Naive thymus-derived CD4-positive, alpha-beta T cell (primary cell): ENCODE measurements at regions of chr7 and their contacts with region 1.

Region 1: DNA sequence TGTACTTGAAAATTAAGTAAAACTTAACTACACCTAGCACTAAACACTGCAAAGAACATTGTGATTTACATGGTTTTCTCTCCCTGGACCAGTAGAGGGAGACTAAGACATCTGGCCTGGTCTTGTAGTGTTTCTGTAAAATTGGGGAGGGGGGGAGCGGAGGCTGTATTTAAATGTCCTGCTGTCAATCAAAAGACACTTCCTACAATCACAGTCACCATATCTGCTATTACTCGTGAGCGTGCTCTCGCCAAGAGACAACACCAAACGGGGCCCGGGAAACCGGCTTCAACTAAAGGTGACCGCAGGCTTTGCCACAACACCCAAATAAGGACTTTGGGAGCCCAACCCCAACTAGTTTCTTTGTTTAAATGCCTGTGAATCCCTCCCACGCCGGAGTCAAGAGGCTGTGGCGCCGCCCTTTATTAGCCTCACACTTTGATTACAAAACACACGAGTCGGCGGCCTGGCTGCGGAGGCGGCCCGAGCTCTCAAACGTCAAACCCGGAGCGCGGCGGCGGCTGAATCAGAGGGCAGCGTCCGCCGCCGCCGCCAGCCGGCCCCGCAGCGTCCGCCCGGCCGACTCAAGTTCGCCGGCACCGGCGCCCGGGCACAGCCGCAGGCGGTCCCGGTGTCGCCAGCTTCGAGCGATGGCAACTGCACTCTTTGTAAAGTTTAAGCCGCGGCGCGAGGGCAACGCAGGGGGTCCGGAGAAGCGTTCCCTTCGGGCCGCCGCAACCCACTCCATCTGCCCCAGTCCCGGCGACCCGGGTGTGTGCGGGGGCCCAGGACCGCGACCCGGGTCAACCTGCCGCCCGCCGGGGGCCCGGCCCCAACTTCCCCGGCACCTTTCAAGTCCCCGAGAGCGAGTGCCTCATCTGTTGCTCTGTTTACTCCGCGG is 1.3 kb downstream of the KDM7A start:
- DNase-seq: peak; percentile 69 to 95 (median 92)
- ATAC-seq: peak; percentile 73
- H3K4me3 ChIP-seq: peak overlapping the region; percentile 63
- H3K4me3 Mint-ChIP-seq: peak overlapping the region; percentile 68 to 94 (median 89)
- H3K27ac ChIP-seq: peak overlapping the region; percentile 92
- H3K27ac Mint-ChIP-seq: peak overlapping the region; percentile 81 to 98 (median 93)
- H3K4me1 ChIP-seq: peaks cover 25 to 26% of the 10 kb centered on the region in 2 donors
- H3K4me1 Mint-ChIP-seq: peaks cover 29 to 61% (median 52%) of the 10 kb centered on the region in 7 donors
- H3K27me3 ChIP-seq: no peaks in the 10 kb centered on the region
- H3K27me3 Mint-ChIP-seq: peaks cover 0 to 4% (median 0%) of the 10 kb centered on the region in 5 donors

Region 2: DNA sequence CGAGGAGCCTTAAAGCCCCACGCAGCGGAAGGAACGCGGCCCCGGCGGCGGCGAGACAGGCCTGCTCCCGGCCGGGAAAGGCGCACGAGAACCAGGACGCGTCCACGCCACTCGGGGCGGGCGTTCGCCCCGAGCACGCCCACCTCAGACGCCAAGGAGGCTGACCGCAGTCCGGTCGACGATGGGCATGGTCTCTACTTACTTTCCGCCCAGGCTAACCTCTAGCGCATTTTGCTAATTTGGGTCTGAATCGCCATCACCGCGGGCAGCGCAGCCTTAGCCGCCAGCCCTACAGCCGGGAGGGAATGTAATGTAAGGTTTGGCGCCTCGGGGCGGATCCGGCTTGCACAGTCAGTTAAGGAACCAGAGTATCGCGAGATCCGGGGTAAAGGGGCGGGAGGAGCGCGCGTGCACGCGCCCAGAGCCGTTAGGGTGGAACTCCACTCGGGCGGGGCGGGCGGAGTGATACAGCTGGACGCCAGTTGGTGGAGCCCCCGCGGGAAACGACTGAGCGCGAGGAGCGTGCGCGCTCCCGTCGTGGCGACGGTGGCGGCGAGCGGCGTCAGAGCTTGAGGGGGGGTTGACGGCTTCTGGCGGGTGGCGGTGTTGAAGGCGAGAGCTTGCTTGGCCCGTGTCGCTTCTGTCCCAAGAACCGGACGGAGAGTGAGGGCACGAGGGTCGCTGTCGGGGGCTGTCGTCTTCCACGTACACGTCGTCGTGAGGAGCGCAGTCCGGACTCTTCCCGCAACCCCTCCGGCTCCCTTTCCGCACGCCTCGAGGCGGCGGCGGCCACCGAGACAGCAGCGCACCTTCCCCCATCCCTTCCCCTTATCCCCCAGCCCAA is 815.9 kb before region 1 on chr7 and contains the start of gene LUC7L2:
- CTCF ChIA-PET with region 1: no interaction called
- POLR2A ChIA-PET with region 1: interaction called, 5 read pairs
- intact Hi-C with region 1: loop called (anchors 1 kb)
- DNase-seq: peak; percentile 96 to 100 (median 99)
- ATAC-seq: peak; percentile 91
- H3K4me3 ChIP-seq: peak within 1 kb of the TSS; percentile 80
- H3K4me3 Mint-ChIP-seq: peak within 1 kb of the TSS; percentile 93 to 100 (median 99)
- H3K27ac ChIP-seq: peak within 1 kb of the TSS; percentile 97
- H3K27ac Mint-ChIP-seq: peak within 1 kb of the TSS; percentile 95 to 100 (median 98)
- H3K4me1 ChIP-seq: peaks cover 10 to 27% of the 10 kb centered on the region in 2 donors
- H3K4me1 Mint-ChIP-seq: peaks cover 21 to 60% (median 45%) of the 10 kb centered on the region in 7 donors
- H3K27me3 ChIP-seq: no peaks in the 10 kb centered on the region
- H3K27me3 Mint-ChIP-seq: no peaks in the 10 kb centered on the region
- total RNA-seq, gene LUC7L2: 116 to 183 (median 150) TPM

Region 3: DNA sequence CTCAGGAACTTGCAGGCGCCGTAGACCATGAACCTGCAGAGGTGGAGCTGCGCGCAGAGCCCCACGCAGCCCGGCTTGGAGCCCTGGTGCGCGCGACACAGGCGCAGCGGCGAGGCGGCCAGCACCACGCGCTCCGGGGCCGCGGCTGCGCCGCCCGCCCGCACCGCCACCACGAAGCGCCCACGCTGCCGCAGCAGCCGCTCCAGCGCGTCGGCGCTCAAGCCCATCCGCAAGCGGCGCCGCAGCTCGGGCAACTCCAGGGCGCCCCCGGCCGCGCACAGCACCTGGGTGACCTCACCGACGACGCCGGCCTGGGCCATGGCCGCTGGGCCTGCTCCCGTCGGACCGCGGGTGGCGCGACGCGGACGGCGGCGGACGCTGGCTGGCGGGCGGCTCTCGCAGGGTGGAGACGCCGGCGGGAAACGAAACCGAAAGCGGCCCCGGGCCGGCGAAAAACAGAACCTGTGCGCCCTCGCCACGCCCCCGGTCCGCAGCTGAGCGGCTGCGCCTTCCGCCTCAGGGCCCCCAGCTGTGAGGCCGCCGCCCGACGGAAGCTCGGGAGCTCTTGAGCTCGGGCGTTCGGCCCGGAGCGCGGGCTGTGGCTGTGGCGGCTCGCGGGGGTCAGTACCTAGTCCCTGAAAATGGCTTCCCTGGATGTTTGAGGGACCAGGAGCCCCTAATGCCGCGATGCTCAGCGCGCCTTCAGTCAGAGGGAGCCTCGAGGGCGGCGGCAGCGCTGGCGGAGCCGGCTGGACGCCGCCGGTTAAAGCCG is 112.8 kb before region 1 on chr7 and contains the start of gene PARP12:
- CTCF ChIA-PET with region 1: no interaction called
- POLR2A ChIA-PET with region 1: interaction called, 9 read pairs
- intact Hi-C with region 1: loop called (anchors 1 kb)
- DNase-seq: peak; percentile 77 to 86 (median 83)
- ATAC-seq: peak; percentile 91
- H3K4me3 ChIP-seq: peak within 1 kb of the TSS; percentile 79
- H3K4me3 Mint-ChIP-seq: peak within 1 kb of the TSS; percentile 79 to 94 (median 90)
- H3K27ac ChIP-seq: peak within 1 kb of the TSS; percentile 81
- H3K27ac Mint-ChIP-seq: peak within 1 kb of the TSS; percentile 83 to 95 (median 92)
- H3K4me1 ChIP-seq: peaks cover 32 to 38% of the 10 kb centered on the region in 2 donors
- H3K4me1 Mint-ChIP-seq: peaks cover 34 to 55% (median 48%) of the 10 kb centered on the region in 7 donors
- H3K27me3 ChIP-seq: no peaks in the 10 kb centered on the region
- H3K27me3 Mint-ChIP-seq: peaks cover 0 to 7% (median 0%) of the 10 kb centered on the region in 5 donors
- total RNA-seq, gene PARP12: 66.2 to 145 (median 94.5) TPM

Region 4: DNA sequence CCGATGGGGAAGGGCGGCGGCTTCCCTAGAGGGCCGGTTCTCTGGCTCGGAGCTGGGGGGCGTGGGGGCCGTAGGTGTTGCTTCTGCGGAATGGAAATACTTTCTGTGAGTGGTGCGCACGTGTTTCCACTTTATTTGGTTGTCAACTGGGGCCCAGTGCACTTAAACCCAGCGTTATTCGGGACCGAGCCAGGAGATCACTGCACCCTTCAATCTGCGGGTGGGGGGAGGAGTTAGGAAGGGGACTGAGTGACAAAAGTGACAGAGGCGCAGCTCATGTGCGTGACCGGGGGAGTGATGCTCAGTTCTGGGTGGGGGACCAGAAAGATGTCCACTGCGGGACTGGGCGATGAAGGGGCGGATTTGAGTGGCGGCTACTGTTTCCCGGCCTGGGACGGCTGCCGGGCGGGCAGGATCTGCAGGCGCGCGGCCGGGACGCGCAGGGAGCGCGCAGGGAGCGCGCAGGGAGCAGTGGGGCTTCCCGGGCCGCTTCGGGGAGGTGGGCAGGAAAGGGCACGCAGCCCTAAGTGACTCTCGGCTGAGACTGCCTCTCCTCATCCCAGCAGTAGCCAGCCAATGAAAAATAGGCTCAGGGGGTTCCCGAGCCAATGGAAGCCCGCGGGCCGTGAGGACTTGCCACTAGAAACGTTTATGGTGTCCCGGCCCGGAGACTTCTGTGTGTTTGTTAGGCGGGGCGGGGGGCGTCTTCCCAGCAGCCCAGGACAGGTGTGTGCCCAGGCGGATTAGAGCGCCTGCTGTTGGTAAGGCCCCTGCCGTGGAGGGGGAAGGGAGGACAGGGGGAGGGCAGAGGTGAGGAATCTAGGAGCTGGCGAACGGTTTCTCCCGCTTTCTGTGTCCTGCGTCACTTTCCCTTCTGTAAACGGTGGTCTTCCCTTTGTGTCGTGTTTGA is 55.6 kb after region 1 on chr7:
- CTCF ChIA-PET with region 1: interaction called, 8 read pairs
- POLR2A ChIA-PET with region 1: interaction called, 409 read pairs
- intact Hi-C with region 1: loop called (anchors 1 kb)
- DNase-seq: peak; percentile 13 to 73 (median 44)
- ATAC-seq: peak; percentile 30
- H3K4me3 ChIP-seq: peak overlapping the region; percentile 95
- H3K4me3 Mint-ChIP-seq: peak overlapping the region; percentile 84 to 99 (median 96)
- H3K27ac ChIP-seq: peak overlapping the region; percentile 91
- H3K27ac Mint-ChIP-seq: peak overlapping the region; percentile 95 to 100 (median 99)
- H3K4me1 ChIP-seq: peaks cover 16 to 21% of the 10 kb centered on the region in 2 donors
- H3K4me1 Mint-ChIP-seq: peaks cover 24 to 56% (median 51%) of the 10 kb centered on the region in 7 donors
- H3K27me3 ChIP-seq: no peaks in the 10 kb centered on the region
- H3K27me3 Mint-ChIP-seq: peaks cover 0 to 2% (median 0%) of the 10 kb centered on the region in 5 donors

Region 5: DNA sequence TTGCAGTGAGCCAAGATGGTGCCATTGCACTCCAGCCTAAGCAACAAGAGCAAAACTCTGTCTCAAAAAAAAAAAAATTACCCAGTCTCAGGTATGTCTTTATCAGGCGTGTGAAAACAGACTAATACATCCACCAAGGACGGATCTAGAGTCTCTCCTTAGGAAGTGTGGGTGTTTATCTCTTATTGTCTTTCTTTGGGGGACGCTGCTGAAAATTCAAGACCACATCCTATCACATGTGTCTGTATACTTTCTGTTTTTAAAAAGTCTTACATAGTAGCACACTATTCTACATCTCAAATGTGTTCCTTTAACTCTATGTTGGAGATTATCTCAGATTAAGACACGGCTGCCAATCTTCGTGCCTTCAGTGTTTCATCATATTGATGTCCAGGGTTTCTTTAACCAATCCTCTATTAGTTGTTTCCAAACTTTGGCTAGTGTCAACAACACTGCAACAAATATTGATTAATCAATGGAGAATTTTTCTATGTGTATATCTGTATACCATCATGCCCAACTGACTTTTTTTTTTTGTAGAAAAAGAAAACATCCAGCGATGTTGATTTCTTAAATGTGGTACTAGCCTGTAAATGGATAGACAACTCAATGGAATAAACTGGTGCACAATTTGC is 93.7 kb after region 1 on chr7:
- CTCF ChIA-PET with region 1: no interaction called
- POLR2A ChIA-PET with region 1: interaction called, 44 read pairs
- intact Hi-C with region 1: loop called in 1 of 2 experiments (anchors 1 kb)
- DNase-seq: peak in 7 of 9 donors; percentile 16 to 73 (median 58)
- ATAC-seq: peak; percentile 81
- H3K4me3 ChIP-seq: no peak overlapping the region
- H3K4me3 Mint-ChIP-seq: peak overlapping the region; percentile 20 to 73 (median 52)
- H3K27ac ChIP-seq: peak overlapping the region; percentile 8
- H3K27ac Mint-ChIP-seq: peak overlapping the region; percentile 53 to 95 (median 88)
- H3K4me1 ChIP-seq: peaks cover 5 to 12% of the 10 kb centered on the region in 2 donors
- H3K4me1 Mint-ChIP-seq: peaks cover 19 to 45% (median 27%) of the 10 kb centered on the region in 7 donors
- H3K27me3 ChIP-seq: no peaks in the 10 kb centered on the region
- H3K27me3 Mint-ChIP-seq: no peaks in the 10 kb centered on the region

Region 6: DNA sequence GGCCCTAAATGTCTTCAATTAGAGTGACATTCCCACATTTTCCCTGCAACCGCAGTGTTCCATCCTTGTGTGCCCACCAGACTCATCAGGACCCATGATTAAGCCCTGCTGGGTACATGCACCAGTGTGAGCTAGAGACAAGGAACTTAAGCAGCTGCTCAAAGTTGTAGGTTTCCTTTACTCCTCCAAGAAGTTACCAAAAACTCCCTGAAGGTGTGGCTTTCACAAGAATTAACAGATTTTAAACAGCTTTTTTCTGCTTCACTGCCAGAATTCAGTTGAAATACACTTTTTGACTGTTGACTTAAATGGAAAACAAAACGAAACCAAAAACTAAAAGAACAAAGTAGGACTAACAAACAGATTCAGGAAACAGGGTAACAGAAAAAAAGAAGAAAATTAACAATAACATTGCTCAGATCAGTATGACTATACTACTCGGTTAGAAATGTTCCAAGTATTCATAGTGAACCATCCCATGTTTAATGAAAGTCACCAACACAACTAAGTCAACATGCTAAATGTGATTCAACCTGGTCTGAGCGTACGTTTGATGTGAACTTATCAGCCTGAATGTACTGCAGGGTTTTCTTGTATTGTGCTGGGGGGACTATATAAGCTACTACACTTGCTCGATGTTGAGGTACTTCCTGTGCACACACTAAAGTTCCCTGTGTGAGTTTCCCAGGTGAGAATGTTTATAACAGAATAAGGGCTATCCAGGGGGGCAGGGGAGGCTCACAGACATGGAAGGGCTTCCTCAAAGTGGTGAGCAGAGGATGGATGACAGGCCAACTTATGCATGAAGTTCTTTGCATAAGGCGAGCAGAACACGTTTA is 200.6 kb after region 1 on chr7:
- CTCF ChIA-PET with region 1: no interaction called
- POLR2A ChIA-PET with region 1: interaction called, 3 read pairs
- intact Hi-C with region 1: loop called in 1 of 2 experiments (anchors 1 kb)
- DNase-seq: peak in 8 of 9 donors; percentile 34 to 71 (median 56)
- ATAC-seq: peak; percentile 89
- H3K4me3 ChIP-seq: peak overlapping the region; percentile 58
- H3K4me3 Mint-ChIP-seq: peak overlapping the region; percentile 67 to 92 (median 84)
- H3K27ac ChIP-seq: peak overlapping the region; percentile 75
- H3K27ac Mint-ChIP-seq: peak overlapping the region; percentile 87 to 97 (median 93)
- H3K4me1 ChIP-seq: peaks cover 6 to 10% of the 10 kb centered on the region in 2 donors
- H3K4me1 Mint-ChIP-seq: peaks cover 0 to 48% (median 20%) of the 10 kb centered on the region in 7 donors
- H3K27me3 ChIP-seq: no peaks in the 10 kb centered on the region
- H3K27me3 Mint-ChIP-seq: no peaks in the 10 kb centered on the region

Region 7: GRCh38 chr7:140673063-140673773 is 497.7 kb after region 1 on chr7:
- CTCF ChIA-PET with region 1: no interaction called
- POLR2A ChIA-PET with region 1: no interaction called
- intact Hi-C with region 1: loop called in 1 of 2 experiments (anchors 1 kb)
- DNase-seq: peak; percentile 56 to 78 (median 75)
- ATAC-seq: peak; percentile 82
- H3K4me3 ChIP-seq: peak overlapping the region; percentile 82
- H3K4me3 Mint-ChIP-seq: peak overlapping the region; percentile 81 to 94 (median 89)
- H3K27ac ChIP-seq: peak overlapping the region; percentile 91
- H3K27ac Mint-ChIP-seq: peak overlapping the region; percentile 68 to 97 (median 88)
- H3K4me1 ChIP-seq: peaks cover 11 to 14% of the 10 kb centered on the region in 2 donors
- H3K4me1 Mint-ChIP-seq: peaks cover 16 to 42% (median 37%) of the 10 kb centered on the region in 7 donors
- H3K27me3 ChIP-seq: no peaks in the 10 kb centered on the region
- H3K27me3 Mint-ChIP-seq: peaks cover 0 to 7% (median 0%) of the 10 kb centered on the region in 5 donors